MCF 10A (cell line): ENCODE measurements at regions of chr7 and their contacts with region 1.

Region 1: GRCh38 chr7:54664235-54665228 is 94.5 kb downstream of the SEC61G start:
- DNase-seq: peak; percentile 52
- H3K4me3 Mint-ChIP-seq: peak overlapping the region; percentile 64
- H3K27ac Mint-ChIP-seq: no peak overlapping the region
- H3K4me1 Mint-ChIP-seq: peaks cover 9% of the 10 kb centered on the region
- H3K27me3 Mint-ChIP-seq: peaks cover 86% of the 10 kb centered on the region
- CTCF ChIP-seq: peak; percentile 80

Region 2: DNA sequence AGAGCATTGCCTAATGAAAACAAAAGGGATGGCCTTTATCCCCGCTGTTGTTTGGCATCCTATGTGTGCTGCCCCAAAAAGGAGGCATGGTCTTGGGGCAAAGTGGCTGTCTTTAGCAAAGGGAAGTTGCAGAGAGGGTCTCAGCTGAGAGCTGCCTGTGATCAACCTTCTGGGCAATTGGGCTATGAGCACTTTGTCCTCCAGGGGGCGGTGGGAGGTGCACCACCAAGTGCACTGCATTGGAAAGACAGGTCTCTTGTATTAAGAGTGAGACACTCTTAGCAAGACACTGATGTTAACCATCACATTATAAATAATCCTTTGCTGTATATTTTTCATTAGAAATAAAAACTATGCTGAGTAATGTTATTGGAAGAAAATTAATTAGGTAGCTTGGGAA is 1314.3 kb before region 1 on chr7:
- CTCF ChIA-PET with region 1: interaction called, 3 read pairs
- POLR2A ChIA-PET with region 1: no interaction called
- intact Hi-C with region 1: loop called (anchors 2 kb)
- DNase-seq: peak; percentile 46
- H3K4me3 Mint-ChIP-seq: no peak overlapping the region
- H3K27ac Mint-ChIP-seq: no peak overlapping the region
- H3K4me1 Mint-ChIP-seq: no peaks in the 10 kb centered on the region
- H3K27me3 Mint-ChIP-seq: peaks cover 48% of the 10 kb centered on the region
- CTCF ChIP-seq: peak; percentile 60

Region 3: DNA sequence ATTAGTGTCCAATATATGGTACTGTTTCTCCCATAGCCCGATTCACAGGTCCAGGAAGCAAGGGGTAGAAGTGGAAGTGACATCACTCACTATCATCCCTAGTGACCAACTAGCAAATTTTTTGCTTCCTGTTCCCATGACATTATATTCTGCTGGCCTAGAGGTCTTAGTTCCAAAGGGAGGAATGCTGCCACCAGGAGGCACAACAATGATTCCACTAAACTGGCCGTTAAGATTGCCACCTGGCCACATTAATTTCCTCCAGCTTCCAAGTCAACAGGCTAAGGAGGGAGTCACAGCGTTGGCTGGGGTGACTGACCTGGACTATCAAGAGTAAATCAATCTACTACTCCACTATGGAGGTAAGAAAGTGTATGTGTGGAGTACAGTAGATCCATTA is 756.8 kb before region 1 on chr7:
- CTCF ChIA-PET with region 1: interaction called, 3 read pairs
- POLR2A ChIA-PET with region 1: no interaction called
- intact Hi-C with region 1: loop called (anchors 5 kb)
- DNase-seq: no peak
- H3K4me3 Mint-ChIP-seq: no peak overlapping the region
- H3K27ac Mint-ChIP-seq: no peak overlapping the region
- H3K4me1 Mint-ChIP-seq: no peaks in the 10 kb centered on the region
- H3K27me3 Mint-ChIP-seq: peaks cover 17% of the 10 kb centered on the region
- CTCF ChIP-seq: no peak

Region 4: GRCh38 chr7:54546081-54546985 is 118.2 kb before region 1 on chr7:
- CTCF ChIA-PET with region 1: interaction called, 4 read pairs
- POLR2A ChIA-PET with region 1: no interaction called
- intact Hi-C with region 1: loop called (anchors 5 kb)
- DNase-seq: no peak
- H3K4me3 Mint-ChIP-seq: peak overlapping the region; percentile 28
- H3K27ac Mint-ChIP-seq: no peak overlapping the region
- H3K4me1 Mint-ChIP-seq: no peaks in the 10 kb centered on the region
- H3K27me3 Mint-ChIP-seq: peaks cover 53% of the 10 kb centered on the region
- CTCF ChIP-seq: peak; percentile 36

Region 5: DNA sequence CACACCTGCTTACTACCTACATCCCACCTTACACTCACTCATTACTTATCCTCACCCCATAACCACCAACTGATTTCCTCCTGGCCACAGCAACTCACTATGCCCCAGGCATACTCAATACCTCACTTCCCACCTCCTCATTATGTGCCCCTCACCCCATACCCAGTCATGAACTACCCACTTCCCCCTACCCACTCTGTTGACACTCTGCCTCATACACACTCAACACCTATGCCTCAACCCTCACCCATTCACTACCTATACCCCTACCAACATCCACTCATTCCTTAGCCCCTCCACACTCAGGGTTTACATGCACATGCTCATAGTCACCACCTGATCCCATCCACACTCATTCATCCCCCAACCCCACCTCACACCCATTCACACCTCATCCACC is 54.9 kb after region 1 on chr7:
- CTCF ChIA-PET with region 1: no interaction called
- POLR2A ChIA-PET with region 1: no interaction called
- intact Hi-C with region 1: no loop called
- DNase-seq: no peak
- H3K4me3 Mint-ChIP-seq: no peak overlapping the region
- H3K27ac Mint-ChIP-seq: no peak overlapping the region
- H3K4me1 Mint-ChIP-seq: peaks cover 11% of the 10 kb centered on the region
- H3K27me3 Mint-ChIP-seq: peaks cover 39% of the 10 kb centered on the region
- CTCF ChIP-seq: no peak